HepG2 (cell line): ENCODE measurements at regions of chr7 and their contacts with region 1.

Region 1: GRCh38 chr7:143958781-143959180 is 4.1 kb downstream of the OR2F1 start:
- DNase-seq: peak; percentile 65
- ATAC-seq: peak; percentile 80
- H3K4me3 ChIP-seq: no peak overlapping the region
- H3K27ac ChIP-seq: peak overlapping the region; percentile 46
- H3K4me1 ChIP-seq: peaks cover 19% of the 10 kb centered on the region
- H3K27me3 ChIP-seq: no peaks in the 10 kb centered on the region
- CTCF ChIP-seq: no peak
- EP300 ChIP-seq: 0 out of 4 replicates have a peak, but pooled peaks have one; percentile 16 to 51
- POLR2A ChIP-seq: no peak
- RAD21 ChIP-seq: no peak

Region 2: GRCh38 chr7:143892527-143893300 is 66.1 kb before region 1 on chr7:
- CTCF ChIA-PET with region 1: no interaction called
- POLR2A ChIA-PET with region 1: no interaction called
- in situ Hi-C with region 1: no loop called
- intact Hi-C with region 1: loop called (anchors 2 kb)
- DNase-seq: peak; percentile 68
- ATAC-seq: peak; percentile 96
- H3K4me3 ChIP-seq: peak overlapping the region in 1 of 3 experiments; percentile 26; a peak in 2 of 6 replicates
- H3K27ac ChIP-seq: peak overlapping the region; percentile 40
- H3K4me1 ChIP-seq: peaks cover 34% of the 10 kb centered on the region
- H3K27me3 ChIP-seq: no peaks in the 10 kb centered on the region
- CTCF ChIP-seq: peak; percentile 78
- EP300 ChIP-seq: no peak
- POLR2A ChIP-seq: no peak
- RAD21 ChIP-seq: peak; percentile 60

Region 3: GRCh38 chr7:143988976-143989745 is 30.4 kb after region 1 on chr7:
- CTCF ChIA-PET with region 1: no interaction called
- POLR2A ChIA-PET with region 1: no interaction called
- in situ Hi-C with region 1: no loop called
- intact Hi-C with region 1: no loop called
- DNase-seq: no peak
- ATAC-seq: no peak
- H3K4me3 ChIP-seq: no peak overlapping the region
- H3K27ac ChIP-seq: no peak overlapping the region
- H3K4me1 ChIP-seq: no peaks in the 10 kb centered on the region
- H3K27me3 ChIP-seq: no peaks in the 10 kb centered on the region
- CTCF ChIP-seq: no peak
- EP300 ChIP-seq: no peak
- POLR2A ChIP-seq: no peak
- RAD21 ChIP-seq: no peak

Region 4: DNA sequence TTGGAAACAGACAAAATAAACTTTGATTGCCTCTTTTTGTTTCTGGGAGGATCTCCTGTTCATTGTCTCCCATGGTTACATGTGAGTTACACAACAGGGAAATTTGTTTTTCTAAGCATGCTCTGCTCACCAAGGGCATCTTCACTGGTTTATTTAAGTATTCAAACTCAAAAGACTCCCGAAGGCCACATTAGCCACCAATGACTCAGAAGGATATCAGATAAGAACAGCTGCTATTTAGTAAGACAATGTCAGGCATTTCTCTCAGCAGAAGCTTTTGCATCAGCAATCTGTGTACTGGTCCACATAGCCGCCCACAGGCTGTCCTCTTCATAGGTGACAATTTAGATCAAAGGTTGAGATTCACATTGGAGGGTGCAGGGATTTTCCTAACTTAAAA is 60.7 kb after region 1 on chr7:
- CTCF ChIA-PET with region 1: no interaction called
- POLR2A ChIA-PET with region 1: no interaction called
- in situ Hi-C with region 1: no loop called
- intact Hi-C with region 1: no loop called
- DNase-seq: peak; percentile 69
- ATAC-seq: peak; percentile 52; the same call in 2 of the 3 replicates
- H3K4me3 ChIP-seq: no peak overlapping the region
- H3K27ac ChIP-seq: no peak overlapping the region
- H3K4me1 ChIP-seq: no peaks in the 10 kb centered on the region
- H3K27me3 ChIP-seq: no peaks in the 10 kb centered on the region
- CTCF ChIP-seq: no peak
- EP300 ChIP-seq: no peak
- POLR2A ChIP-seq: no peak
- RAD21 ChIP-seq: no peak